ENCODE measurements at regions of chr12 and their contacts with region 1.

Region 1: GRCh38 chr12:132083941-132084620 is 60.0 kb downstream of the DDX51 start:
- DNase-seq: peak; percentile 87
- H3K4me3 Mint-ChIP-seq: peak overlapping the region; percentile 96
- H3K27ac Mint-ChIP-seq: peak overlapping the region; percentile 90
- H3K4me1 Mint-ChIP-seq: peaks cover 32% of the 10 kb centered on the region
- H3K27me3 Mint-ChIP-seq: no peaks in the 10 kb centered on the region

Region 2: DNA sequence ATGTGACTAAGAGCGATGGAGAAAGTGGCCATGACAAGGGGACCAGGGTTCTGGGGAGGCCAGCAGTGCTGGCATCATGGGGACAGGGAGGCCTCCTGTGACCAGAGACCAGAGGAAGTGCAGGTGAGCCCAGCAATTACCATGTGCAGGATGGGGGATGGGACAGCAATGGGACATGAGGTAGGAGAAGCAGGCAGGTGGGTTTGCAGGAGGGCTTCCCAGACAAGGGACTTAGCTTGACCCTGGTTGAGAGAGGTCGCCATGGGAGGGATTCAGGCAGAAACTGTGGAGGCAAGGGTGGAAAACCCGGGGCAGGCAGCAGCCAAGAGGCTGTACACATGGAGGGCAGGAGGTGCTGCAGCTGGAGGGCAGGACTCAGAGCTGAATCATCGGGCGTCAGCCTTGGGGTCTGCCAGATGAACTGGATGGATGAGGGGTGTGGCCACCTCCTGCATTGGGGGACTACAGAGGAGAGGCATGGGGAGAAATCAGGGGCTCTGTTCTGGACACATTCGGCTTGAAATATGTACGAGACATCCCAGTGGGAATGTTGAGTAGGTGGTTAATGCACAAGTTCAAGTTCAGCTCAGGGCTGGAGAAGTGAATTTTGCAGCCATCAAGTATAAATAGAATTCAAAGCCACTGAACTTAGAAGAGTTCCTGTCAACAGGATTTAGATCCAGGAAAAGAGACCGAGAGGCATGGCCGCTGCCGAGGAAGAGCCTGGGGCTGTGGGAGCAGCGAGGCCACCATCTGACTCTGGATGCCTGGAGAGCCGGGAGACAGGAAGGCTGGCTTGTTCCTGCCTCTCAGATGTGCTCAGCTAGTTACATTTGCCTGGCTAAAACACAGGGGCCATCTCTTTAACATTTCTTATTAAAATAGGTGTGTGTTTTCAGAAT is 336.6 kb before region 1 on chr12:
- CTCF ChIA-PET with region 1: no interaction called
- intact Hi-C with region 1: no loop called
- DNase-seq: no peak
- H3K4me3 Mint-ChIP-seq: no peak overlapping the region
- H3K27ac Mint-ChIP-seq: no peak overlapping the region
- H3K4me1 Mint-ChIP-seq: peaks cover 3% of the 10 kb centered on the region
- H3K27me3 Mint-ChIP-seq: no peaks in the 10 kb centered on the region

Region 3: DNA sequence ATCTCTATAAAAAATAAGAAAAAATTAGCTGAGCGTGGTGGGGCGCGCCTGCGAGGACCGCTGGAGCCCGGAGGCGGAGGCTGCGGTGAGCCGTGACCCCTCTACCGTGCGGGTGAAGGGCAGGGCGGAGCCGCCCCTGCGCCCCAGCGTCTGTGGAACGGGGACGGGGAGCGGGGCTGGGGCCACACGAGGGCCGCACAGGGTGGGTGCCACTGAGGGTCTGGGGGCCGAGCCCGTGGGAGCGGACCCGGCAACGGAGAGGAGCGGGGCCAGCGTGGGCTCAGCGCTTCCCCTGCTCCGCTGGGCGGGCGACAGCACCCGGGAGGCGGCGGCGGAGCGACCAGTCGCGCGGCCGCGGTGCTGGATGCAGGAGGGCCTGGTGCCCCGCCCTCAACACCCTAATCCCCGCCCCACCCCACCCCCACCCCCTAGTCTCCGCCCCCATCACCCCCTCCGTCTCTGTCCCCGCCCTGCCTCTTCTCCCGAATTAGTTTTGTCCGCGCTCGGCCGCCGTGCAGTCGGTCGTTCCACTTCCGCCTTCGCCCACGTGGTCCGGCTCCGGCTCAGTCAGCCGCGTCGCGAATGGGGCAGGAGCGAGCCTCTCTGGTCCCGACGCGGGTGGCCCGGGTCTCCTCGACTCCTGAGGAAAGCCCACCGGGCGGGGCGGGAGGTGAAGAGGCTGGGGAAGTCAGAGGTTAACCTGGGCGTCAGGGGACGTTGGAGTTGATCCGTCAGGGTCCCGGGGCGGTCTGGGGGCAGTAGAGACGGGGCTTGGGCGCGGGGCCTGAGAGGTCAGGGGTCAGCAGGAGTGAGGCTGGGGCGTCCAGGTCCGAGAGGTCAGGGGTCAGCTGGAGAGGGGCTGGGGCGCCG is 155.1 kb before region 1 on chr12 and contains the start of gene PUS1:
- CTCF ChIA-PET with region 1: no interaction called
- intact Hi-C with region 1: loop called (anchors 1 kb)
- DNase-seq: peak; percentile 95
- H3K4me3 Mint-ChIP-seq: peak within 1 kb of the TSS; percentile 96
- H3K27ac Mint-ChIP-seq: peak within 1 kb of the TSS; percentile 80
- H3K4me1 Mint-ChIP-seq: peaks cover 30% of the 10 kb centered on the region
- H3K27me3 Mint-ChIP-seq: no peaks in the 10 kb centered on the region
- total RNA-seq, gene PUS1: 37.7 to 38.8 TPM

Region 4: DNA sequence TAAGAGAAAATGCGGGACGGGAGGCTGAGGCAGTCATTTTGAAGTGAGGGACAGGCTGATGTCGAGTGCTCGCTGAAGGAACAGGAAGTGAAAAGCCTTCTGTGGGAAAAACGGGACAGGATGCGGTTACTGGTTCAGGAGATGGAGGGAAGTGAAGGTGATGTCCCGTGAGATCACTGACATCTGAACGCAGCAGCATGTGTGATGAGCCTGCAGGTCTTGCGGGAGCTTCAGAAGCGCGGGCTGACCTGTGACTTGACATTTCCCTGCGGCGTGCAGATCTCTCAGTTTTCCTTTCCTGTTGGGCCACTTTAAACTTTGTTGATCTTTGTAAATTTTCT is 17.8 kb before region 1 on chr12:
- CTCF ChIA-PET with region 1: no interaction called
- intact Hi-C with region 1: loop called (anchors 1 kb)
- DNase-seq: peak; percentile 81
- H3K4me3 Mint-ChIP-seq: peak overlapping the region; percentile 20
- H3K27ac Mint-ChIP-seq: peak overlapping the region; percentile 70
- H3K4me1 Mint-ChIP-seq: peaks cover 18% of the 10 kb centered on the region
- H3K27me3 Mint-ChIP-seq: no peaks in the 10 kb centered on the region

Region 5: DNA sequence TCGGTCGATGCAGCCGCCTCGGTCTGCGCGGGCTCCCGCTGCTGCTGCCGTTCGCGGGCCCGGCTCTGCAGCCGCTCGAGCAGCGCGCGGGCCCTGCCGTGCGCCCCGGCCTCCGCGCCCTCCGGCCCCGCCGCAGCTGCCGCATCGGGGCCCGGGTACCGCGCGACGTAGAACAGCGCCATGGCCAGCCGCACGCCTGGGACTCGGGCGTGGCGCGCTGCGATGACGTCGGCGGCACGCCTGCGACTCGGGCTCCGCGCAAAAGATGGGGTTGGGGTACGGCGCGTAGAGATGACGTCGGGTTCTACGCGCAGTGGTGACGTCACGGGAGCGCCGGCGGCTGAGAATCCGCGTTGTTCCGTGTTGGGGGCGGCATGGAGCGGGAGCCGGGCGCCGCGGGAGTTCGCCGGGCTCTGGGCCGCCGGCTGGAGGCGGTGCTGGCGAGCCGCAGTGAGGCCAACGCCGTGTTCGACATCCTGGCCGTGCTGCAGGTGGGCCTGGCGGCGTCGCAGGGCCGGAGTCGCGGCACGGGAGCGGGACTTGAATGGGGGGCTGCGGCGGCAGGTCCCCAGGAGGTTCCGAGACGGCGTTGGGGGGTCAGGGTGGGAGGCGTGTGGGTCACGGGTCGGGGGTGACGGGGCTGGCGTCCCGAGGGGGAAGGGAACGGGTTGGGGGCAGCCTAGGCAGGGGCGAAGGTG is 60.2 kb after region 1 on chr12 and contains the starts of genes DDX51 and NOC4L:
- CTCF ChIA-PET with region 1: no interaction called
- intact Hi-C with region 1: loop called (anchors 2 kb)
- DNase-seq: peak; percentile 94
- H3K4me3 Mint-ChIP-seq: peak within 1 kb of the TSS; percentile 90
- H3K27ac Mint-ChIP-seq: peak within 1 kb of the TSS; percentile 87
- H3K4me1 Mint-ChIP-seq: peaks cover 31% of the 10 kb centered on the region
- H3K27me3 Mint-ChIP-seq: no peaks in the 10 kb centered on the region
- total RNA-seq, gene DDX51: 18.8 to 20.0 TPM
- total RNA-seq, gene NOC4L: 27.1 to 27.4 TPM

Measured in activated naive CD4-positive, alpha-beta T cell treated with anti-CD3 and anti-CD28 coated beads for 36 hours (primary cell).